Psoas muscle (tissue), 8 donors: ENCODE measurements at regions of chr11 and their contacts with region 1.

Region 1: DNA sequence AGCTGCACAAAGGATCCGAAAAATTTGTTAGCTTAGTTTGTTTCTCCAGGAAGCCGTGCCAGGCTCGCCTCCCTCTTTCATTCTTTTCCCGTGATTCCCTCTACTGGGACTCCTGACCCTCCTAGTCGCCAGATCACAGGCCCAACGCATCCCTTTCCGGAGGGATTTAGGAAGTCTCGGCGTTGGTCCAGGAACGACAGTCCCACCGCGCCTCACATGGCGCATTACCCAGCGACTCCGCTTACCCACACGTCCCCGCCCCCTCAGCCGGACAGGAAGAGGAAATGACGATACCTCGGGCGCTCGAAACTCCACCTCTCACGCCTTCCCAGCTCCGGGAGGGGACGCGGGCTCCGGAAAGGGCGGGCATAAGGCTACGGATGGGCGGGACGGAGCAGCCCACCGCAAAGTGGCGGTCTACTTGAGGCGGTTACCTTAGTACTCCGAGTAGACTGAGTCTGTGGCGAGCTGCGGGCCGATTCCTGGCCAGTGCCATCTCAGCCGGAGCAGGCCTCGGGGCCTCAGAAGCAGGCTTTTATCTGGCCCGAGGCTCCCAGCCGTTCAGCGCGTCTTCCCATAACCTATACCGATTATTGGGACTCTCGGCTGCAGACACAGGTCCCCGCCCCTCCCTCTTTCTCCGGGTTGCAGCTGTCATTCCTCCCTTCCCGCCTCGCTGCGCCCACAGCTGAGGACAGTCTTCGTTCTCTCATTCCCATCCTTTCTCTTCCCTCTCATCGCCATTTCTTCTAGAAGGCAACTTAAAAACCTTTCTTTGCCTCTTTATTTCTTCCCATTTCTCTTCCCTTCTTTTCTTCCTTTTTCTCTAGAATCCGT is at the start of gene CCDC15:
- DNase-seq: peak; percentile 98
- ATAC-seq: peak; percentile 100
- H3K4me3 ChIP-seq: peak within 1 kb of the TSS; percentile 87
- H3K27ac ChIP-seq: peak within 1 kb of the TSS; percentile 89
- H3K4me1 ChIP-seq: peaks cover 9% of the 10 kb centered on the region
- H3K27me3 ChIP-seq: no peaks in the 10 kb centered on the region
- CTCF ChIP-seq: no peak
- total RNA-seq, gene CCDC15: 0.07 to 0.42 (median 0.25) TPM

Region 2: GRCh38 chr11:125111343-125112207 is 157.6 kb after region 1 on chr11 and contains the start of gene TMEM218:
- intact Hi-C with region 1: loop called in 1 of 2 experiments (anchors 10 kb)
- DNase-seq: peak; percentile 100
- ATAC-seq: peak; percentile 100
- H3K4me3 ChIP-seq: peak within 1 kb of the TSS; percentile 91
- H3K27ac ChIP-seq: peak within 1 kb of the TSS; percentile 71
- H3K4me1 ChIP-seq: peaks cover 15% of the 10 kb centered on the region
- H3K27me3 ChIP-seq: no peaks in the 10 kb centered on the region
- CTCF ChIP-seq: no peak
- total RNA-seq, gene TMEM218: 4.9 to 12.1 (median 5.9) TPM

Region 3: GRCh38 chr11:125123947-125124617 is 170.1 kb after region 1 on chr11:
- intact Hi-C with region 1: loop called (anchors 10 kb)
- DNase-seq: peak; percentile 52 to 77
- ATAC-seq: peak; percentile 93 to 100 (median 98)
- H3K4me3 ChIP-seq: peak overlapping the region; percentile 62
- H3K27ac ChIP-seq: peak overlapping the region; percentile 67
- H3K4me1 ChIP-seq: no peaks in the 10 kb centered on the region
- H3K27me3 ChIP-seq: peaks cover 0 to 9% (median 0%) of the 10 kb centered on the region in 3 donors
- CTCF ChIP-seq: peak; percentile 65

Region 4: GRCh38 chr11:125364121-125364826 is 410.3 kb after region 1 on chr11:
- intact Hi-C with region 1: loop called in 1 of 2 experiments (anchors 5 kb)
- DNase-seq: no peak
- ATAC-seq: no peak
- H3K4me3 ChIP-seq: no peak overlapping the region
- H3K27ac ChIP-seq: no peak overlapping the region
- H3K4me1 ChIP-seq: peaks cover under 1% of the 10 kb centered on the region
- H3K27me3 ChIP-seq: no peaks in the 10 kb centered on the region
- CTCF ChIP-seq: no peak

Region 5: GRCh38 chr11:125429166-125429707 is 475.3 kb after region 1 on chr11:
- intact Hi-C with region 1: loop called in 1 of 2 experiments (anchors 10 kb)
- DNase-seq: peak; percentile 58 to 78
- ATAC-seq: peak in 2 of 4 donors; percentile 23 to 47
- H3K4me3 ChIP-seq: no peak overlapping the region
- H3K27ac ChIP-seq: no peak overlapping the region
- H3K4me1 ChIP-seq: peaks cover 46% of the 10 kb centered on the region
- H3K27me3 ChIP-seq: no peaks in the 10 kb centered on the region
- CTCF ChIP-seq: peak; percentile 61

Region 6: GRCh38 chr11:125568970-125569914 is 615.3 kb after region 1 on chr11 and contains the start of gene EI24:
- intact Hi-C with region 1: loop called in 1 of 2 experiments (anchors 5 kb)
- DNase-seq: peak; percentile 94 to 95
- ATAC-seq: peak; percentile 96
- H3K4me3 ChIP-seq: peak within 1 kb of the TSS; percentile 96
- H3K27ac ChIP-seq: peak within 1 kb of the TSS; percentile 98
- H3K4me1 ChIP-seq: peaks cover 21% of the 10 kb centered on the region
- H3K27me3 ChIP-seq: no peaks in the 10 kb centered on the region
- CTCF ChIP-seq: peak; percentile 76
- total RNA-seq, gene EI24: 52.9 to 140 (median 93.6) TPM

Region 7: DNA sequence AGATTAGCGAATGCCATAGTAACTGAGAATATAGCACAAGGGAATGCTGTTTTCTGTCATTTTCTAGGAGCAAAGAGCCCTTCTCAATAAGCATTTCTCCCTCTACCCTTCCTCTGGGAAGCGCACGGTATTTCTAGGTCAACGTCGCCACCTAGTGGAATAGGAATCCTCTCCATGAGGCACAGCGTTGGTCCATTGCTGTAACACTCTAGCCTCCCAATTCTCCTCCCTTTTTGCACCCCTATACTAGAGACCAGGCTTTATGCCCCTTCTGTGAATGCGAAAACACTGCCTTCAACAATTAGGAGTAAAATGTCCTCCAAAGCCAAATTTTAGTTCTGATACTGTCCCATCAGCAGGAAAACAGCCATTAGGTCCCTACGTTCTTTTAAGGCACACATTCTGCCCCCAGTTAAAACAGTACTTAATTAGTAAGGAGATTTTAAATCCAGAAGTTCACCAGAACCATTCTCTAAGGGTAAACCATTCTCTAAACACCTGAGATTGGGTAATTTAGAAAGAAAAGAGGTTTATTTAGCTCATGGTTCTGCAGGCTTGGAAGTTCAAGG is 920.7 kb after region 1 on chr11:
- intact Hi-C with region 1: loop called in 1 of 2 experiments (anchors 10 kb)
- DNase-seq: no peak
- ATAC-seq: peak; percentile 71 to 86 (median 84)
- H3K4me3 ChIP-seq: no peak overlapping the region
- H3K27ac ChIP-seq: no peak overlapping the region
- H3K4me1 ChIP-seq: no peaks in the 10 kb centered on the region
- H3K27me3 ChIP-seq: no peaks in the 10 kb centered on the region
- CTCF ChIP-seq: peak; percentile 68